Activated CD4-positive, alpha-beta T cell treated with anti-CD3 and anti-CD28 coated beads for 36 hours (primary cell): ENCODE measurements at regions of chr3 and their contacts with region 1.

Region 1: DNA sequence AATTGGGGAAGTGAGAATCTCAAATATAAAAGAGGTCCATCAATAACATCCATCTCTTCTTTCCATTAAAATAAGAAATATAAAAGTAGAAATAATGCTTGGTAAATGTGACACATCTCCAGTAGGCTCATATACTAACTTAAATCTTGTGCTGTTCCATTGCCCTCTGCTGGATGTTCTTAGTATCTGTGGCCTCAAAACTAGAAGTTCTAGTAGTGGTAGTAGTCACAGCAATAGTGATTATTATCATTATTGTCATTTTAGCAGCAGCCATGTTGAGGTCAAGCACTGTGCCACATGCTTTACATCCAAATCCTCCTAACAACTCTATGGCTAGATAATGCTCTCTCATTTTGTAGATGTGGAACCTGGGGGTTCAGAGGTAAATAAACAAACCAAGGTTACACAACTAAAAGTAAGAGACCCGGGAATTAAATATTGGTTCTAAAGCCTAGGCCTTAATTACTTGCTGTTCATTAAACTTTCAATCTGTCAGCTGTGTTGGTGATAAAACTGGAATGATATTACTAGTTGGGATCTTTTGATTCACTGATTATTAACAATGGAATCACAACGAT is 20.2 kb upstream of the BTLA start:
- DNase-seq: peak; percentile 37
- ATAC-seq: peak; percentile 77
- H3K4me3 Mint-ChIP-seq: no peak overlapping the region
- H3K27ac Mint-ChIP-seq: no peak overlapping the region
- H3K4me1 Mint-ChIP-seq: peaks cover 22% of the 10 kb centered on the region
- H3K27me3 Mint-ChIP-seq: no peaks in the 10 kb centered on the region

Region 2: GRCh38 chr3:112293368-112294321 is 225.9 kb before region 1 on chr3 and contains the start of gene SLC9C1:
- CTCF ChIA-PET with region 1: interaction called, 21 read pairs
- POLR2A ChIA-PET with region 1: interaction called, 3 read pairs
- intact Hi-C with region 1: loop called (anchors 1 kb)
- DNase-seq: peak; percentile 52
- ATAC-seq: peak; percentile 81
- H3K4me3 Mint-ChIP-seq: peak within 1 kb of the TSS; percentile 53
- H3K27ac Mint-ChIP-seq: peak within 1 kb of the TSS; percentile 38
- H3K4me1 Mint-ChIP-seq: peaks cover 21% of the 10 kb centered on the region
- H3K27me3 Mint-ChIP-seq: no peaks in the 10 kb centered on the region
- total RNA-seq, gene SLC9C1: not detected

Region 3: GRCh38 chr3:112327371-112327951 is 192.1 kb before region 1 on chr3:
- CTCF ChIA-PET with region 1: interaction called, 10 read pairs
- POLR2A ChIA-PET with region 1: no interaction called
- intact Hi-C with region 1: loop called (anchors 1 kb)
- DNase-seq: peak; percentile 54
- ATAC-seq: peak; percentile 100
- H3K4me3 Mint-ChIP-seq: no peak overlapping the region
- H3K27ac Mint-ChIP-seq: no peak overlapping the region
- H3K4me1 Mint-ChIP-seq: peaks cover 4% of the 10 kb centered on the region
- H3K27me3 Mint-ChIP-seq: peaks cover 7% of the 10 kb centered on the region

Region 4: GRCh38 chr3:112464264-112464663 is 55.2 kb before region 1 on chr3:
- CTCF ChIA-PET with region 1: interaction called, 3 read pairs
- POLR2A ChIA-PET with region 1: no interaction called
- intact Hi-C with region 1: loop called (anchors 2 to 10 kb)
- DNase-seq: no peak
- ATAC-seq: no peak
- H3K4me3 Mint-ChIP-seq: no peak overlapping the region
- H3K27ac Mint-ChIP-seq: peak overlapping the region; percentile 52
- H3K4me1 Mint-ChIP-seq: peaks cover 82% of the 10 kb centered on the region
- H3K27me3 Mint-ChIP-seq: no peaks in the 10 kb centered on the region

Region 5: DNA sequence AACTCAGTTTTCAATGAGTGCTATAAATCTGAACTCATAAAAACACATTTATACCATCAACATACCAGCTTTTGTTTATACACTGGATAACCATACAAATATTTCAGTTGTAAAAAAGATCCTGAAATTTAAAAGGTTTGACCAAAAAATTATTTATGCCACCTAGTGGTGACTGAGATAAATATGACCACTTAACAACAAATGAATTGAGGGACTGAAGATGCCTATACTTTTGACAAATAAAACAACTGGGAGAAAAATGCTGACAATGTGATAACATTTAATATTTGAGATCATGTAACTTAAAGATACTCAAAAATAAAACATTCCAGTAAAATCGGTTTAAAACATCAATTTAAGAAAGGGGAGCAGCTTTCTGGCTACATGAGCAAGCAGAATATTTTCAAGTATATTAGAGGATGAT is 11.9 kb after region 1 on chr3:
- CTCF ChIA-PET with region 1: interaction called, 15 read pairs
- POLR2A ChIA-PET with region 1: no interaction called
- intact Hi-C with region 1: no loop called
- DNase-seq: no peak
- ATAC-seq: no peak
- H3K4me3 Mint-ChIP-seq: no peak overlapping the region
- H3K27ac Mint-ChIP-seq: no peak overlapping the region
- H3K4me1 Mint-ChIP-seq: peaks cover 10% of the 10 kb centered on the region
- H3K27me3 Mint-ChIP-seq: no peaks in the 10 kb centered on the region

Region 6: DNA sequence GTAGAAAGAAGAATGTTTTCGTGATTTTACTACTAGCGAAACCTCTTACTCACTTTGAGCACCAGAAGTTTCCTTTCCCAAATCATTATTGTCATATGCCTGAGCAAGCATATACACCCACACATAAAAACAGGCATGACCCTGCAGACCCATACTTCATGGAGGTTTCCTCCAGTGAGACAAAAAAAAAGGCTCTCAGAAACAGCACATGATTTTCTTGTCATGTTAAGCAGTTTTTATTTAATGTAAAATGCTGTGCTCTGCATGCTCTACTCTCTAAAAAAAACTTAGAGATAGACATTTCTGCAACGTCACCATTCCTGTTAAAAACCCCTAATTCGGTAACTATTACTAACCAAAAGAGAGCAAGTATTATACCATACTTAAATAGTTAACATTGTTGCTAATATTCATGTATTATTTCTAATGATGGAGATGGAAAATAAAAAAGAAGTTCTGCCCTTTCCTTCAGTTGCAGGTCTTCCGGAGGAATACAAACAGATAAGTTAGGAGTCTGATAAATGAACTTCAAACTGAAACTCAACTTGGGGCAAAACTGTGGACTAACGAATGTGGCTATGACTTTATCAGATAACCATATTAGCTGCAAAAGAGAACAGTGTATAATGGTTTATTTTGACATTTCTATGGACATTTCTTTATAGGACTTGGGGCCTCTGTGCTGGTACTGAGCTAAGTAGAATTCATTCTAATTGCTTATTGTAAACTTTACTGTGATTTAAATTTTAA is 439.5 kb after region 1 on chr3:
- CTCF ChIA-PET with region 1: no interaction called
- POLR2A ChIA-PET with region 1: no interaction called
- intact Hi-C with region 1: no loop called
- DNase-seq: peak; percentile 36
- ATAC-seq: peak; percentile 97
- H3K4me3 Mint-ChIP-seq: peak overlapping the region; percentile 66
- H3K27ac Mint-ChIP-seq: peak overlapping the region; percentile 80
- H3K4me1 Mint-ChIP-seq: peaks cover 37% of the 10 kb centered on the region
- H3K27me3 Mint-ChIP-seq: no peaks in the 10 kb centered on the region